Activated B cell treated with CpG ODN at 0.5 μM for 24 hours (primary cell): ENCODE measurements at regions of chr1 and their contacts with region 1.

Region 1: DNA sequence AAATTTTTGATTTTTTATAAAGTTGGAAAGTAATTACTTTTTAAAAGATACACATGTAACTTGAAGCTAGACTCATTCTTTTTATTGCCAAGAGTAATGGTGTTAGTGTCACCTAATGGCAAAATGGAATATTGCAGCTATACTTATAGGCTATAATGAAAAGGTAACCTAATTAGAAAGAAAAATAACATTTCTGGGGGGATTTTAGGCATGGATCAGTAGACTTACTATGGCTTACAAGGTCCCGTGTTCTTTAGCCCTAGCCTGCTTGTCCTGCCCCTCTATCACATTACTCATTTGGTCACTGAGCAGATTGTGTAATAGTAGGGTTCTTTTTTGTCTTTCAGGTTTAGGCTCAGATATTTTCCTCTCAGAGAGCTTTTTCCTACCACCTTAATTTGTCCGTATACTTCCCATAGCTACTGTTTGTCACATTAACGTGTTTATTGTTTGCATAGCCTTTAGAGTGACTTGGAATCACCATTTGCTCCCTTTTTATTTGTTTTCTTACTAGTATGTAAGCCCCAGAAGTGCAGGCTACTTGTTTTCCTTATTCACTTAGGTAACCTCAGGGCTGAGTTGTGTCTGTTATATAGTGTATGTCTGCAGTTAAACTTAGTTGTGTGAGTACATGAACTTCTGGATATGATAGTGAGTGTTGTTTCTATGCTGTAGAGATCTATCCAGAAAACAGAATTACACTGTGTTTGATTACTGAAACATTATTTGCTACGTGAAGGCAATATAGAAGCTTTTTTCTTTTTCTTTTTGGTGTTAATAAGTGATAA is 58.7 kb downstream of the RABGAP1L start:
- DNase-seq: no peak
- ATAC-seq: peak; percentile 81
- H3K4me3 Mint-ChIP-seq: no peak overlapping the region
- H3K27ac Mint-ChIP-seq: no peak overlapping the region
- H3K4me1 Mint-ChIP-seq: peaks cover 28% of the 10 kb centered on the region
- H3K27me3 Mint-ChIP-seq: no peaks in the 10 kb centered on the region
- CTCF ChIP-seq: peak; percentile 23

Region 2: DNA sequence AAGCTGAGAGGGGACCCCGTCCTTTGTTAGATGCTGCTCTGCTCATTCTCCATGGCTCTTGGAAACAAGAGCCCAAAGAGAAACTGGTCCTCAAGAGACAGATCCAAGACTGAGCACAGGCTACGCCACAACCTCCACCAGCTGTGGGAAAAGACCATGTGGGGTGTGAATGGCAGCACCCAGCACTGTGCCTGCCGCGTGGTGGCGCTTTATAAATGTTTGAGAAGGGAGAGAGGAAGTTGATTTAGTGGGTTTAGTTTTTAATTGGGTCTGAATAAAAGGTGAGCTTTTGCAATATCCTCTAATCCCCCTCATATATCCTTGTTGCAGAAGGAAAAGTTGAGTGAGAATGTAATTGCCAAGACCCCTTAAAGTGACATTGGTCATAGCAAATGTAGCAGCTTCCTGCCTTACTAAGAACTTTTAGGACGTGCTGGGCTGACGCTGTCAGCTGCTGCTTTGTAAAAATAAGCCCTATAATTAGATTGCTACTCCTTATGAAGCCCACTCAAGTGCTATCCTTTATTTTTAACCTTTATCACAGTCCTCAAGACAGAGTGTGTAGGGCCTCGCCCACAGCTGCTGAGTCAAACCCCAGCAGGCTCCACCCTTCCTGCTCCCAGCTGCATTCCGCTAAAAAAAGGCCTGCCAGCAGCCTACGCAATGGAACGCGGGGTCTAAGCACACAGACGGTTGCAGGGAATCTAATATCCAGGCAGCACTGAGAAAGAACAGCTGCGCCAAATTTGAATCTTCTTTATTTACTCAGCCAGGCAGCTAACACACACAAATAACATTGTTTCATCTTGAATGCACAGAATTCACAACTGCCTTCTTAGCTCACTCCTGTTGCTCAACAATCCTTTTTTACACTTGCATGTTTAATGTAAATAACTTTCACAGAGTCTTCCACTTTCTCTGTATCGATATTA is 788.2 kb before region 1 on chr1:
- CTCF ChIA-PET with region 1: interaction called, 13 read pairs
- POLR2A ChIA-PET with region 1: no interaction called
- intact Hi-C with region 1: loop called (anchors 5 kb)
- DNase-seq: peak; percentile 54
- ATAC-seq: peak; percentile 87
- H3K4me3 Mint-ChIP-seq: peak overlapping the region; percentile 71
- H3K27ac Mint-ChIP-seq: peak overlapping the region; percentile 87
- H3K4me1 Mint-ChIP-seq: peaks cover 25% of the 10 kb centered on the region
- H3K27me3 Mint-ChIP-seq: no peaks in the 10 kb centered on the region
- CTCF ChIP-seq: no peak

Region 3: DNA sequence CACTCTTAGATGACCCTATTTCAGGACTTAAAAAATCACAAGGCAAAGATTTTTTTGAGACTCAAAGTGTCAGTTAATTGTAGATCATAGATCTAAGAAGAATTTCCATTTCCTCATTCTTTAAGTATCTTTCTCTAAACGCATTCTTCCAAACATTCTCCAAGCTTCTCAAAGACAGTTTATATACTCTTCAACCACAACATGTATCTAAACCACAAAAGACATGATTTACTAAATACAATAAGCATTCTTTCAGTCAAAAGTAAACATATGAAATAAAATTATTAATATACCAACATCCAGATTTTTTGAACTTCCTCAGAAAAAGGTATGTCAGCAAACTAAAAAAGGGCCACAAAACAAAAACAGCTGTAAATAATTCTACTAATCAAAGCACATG is 220.2 kb before region 1 on chr1:
- CTCF ChIA-PET with region 1: interaction called, 3 read pairs
- POLR2A ChIA-PET with region 1: no interaction called
- intact Hi-C with region 1: loop called (anchors 5 kb)
- DNase-seq: no peak
- ATAC-seq: no peak
- H3K4me3 Mint-ChIP-seq: no peak overlapping the region
- H3K27ac Mint-ChIP-seq: no peak overlapping the region
- H3K4me1 Mint-ChIP-seq: peaks cover 55% of the 10 kb centered on the region
- H3K27me3 Mint-ChIP-seq: no peaks in the 10 kb centered on the region
- CTCF ChIP-seq: no peak

Region 4: GRCh38 chr1:174022080-174022975 is 195.7 kb before region 1 on chr1 and contains the start of gene RC3H1:
- CTCF ChIA-PET with region 1: interaction called, 3 read pairs
- POLR2A ChIA-PET with region 1: interaction called, 9 read pairs
- intact Hi-C with region 1: loop called (anchors 2 kb)
- DNase-seq: peak; percentile 88
- ATAC-seq: peak; percentile 93
- H3K4me3 Mint-ChIP-seq: peak within 1 kb of the TSS; percentile 97
- H3K27ac Mint-ChIP-seq: peak within 1 kb of the TSS; percentile 96
- H3K4me1 Mint-ChIP-seq: peaks cover 42% of the 10 kb centered on the region
- H3K27me3 Mint-ChIP-seq: no peaks in the 10 kb centered on the region
- CTCF ChIP-seq: no peak
- total RNA-seq, gene RC3H1: 45.6 and 55.6 TPM in 2 replicates

Region 5: DNA sequence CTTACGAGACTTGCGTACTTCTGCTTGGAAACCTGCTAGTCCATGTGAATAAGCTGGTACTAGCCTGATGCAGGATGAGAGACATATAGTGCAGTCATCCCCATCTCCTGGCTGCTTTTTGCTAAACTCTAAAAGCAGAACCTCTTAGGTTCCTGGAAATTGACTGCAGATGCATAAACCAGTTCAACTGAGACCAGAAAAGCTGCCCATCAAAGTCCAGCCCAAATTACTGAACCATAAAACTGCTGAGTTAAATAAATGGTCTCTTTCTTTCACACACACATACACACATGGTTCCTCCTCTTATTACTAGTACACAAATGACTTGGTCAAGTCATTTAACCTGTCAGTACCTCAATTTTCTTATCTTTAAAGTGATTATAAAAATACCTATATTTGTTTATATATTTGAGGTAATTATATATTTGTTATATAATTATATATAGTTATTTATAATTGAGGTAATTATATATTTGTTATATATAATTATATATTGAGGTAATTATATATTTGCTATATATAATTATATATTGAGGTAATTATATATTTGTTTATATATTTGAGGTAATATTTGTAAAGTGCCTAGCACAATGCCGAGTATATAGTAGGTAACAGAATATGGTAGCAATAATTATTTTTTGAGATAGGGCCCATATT is 83.8 kb before region 1 on chr1:
- CTCF ChIA-PET with region 1: interaction called, 10 read pairs
- POLR2A ChIA-PET with region 1: no interaction called
- intact Hi-C with region 1: no loop called
- DNase-seq: no peak
- ATAC-seq: peak; percentile 95
- H3K4me3 Mint-ChIP-seq: peak overlapping the region; percentile 49
- H3K27ac Mint-ChIP-seq: peak overlapping the region; percentile 81
- H3K4me1 Mint-ChIP-seq: peaks cover 33% of the 10 kb centered on the region
- H3K27me3 Mint-ChIP-seq: no peaks in the 10 kb centered on the region
- CTCF ChIP-seq: no peak

Region 6: DNA sequence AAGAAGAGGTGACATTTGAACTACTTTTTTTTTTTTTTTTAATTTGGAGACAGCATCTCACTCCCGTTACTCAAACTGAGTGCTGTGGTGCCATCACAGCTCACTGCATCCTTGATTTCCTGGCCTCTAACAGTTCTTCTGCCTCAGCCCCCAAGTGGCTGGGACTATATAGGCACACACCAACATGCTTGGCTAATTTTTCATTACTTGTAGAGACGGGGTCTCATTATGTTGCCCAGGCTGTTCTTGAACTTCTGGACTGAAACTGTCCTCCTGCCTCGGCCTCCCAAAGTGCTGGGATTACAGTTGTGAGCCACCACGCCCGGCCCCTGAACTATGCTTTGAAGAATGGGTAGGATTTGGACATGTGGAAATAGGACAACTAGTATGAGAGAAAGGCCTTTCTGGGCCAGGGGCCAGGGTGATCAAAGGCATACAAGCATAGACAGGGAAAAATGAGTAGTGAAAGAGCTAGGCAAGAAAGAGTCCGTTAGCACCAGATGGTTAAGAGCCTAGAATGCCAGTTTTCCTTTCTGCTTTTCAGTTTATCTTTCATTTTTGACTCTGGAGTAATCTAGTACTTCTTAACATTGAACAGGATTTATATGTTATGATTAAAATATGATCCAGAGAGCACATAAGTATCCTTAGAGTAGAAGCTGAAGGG is 52.4 kb before region 1 on chr1:
- CTCF ChIA-PET with region 1: interaction called, 3 read pairs
- POLR2A ChIA-PET with region 1: interaction called, 4 read pairs
- intact Hi-C with region 1: loop called (anchors 1 kb)
- DNase-seq: no peak
- ATAC-seq: peak; percentile 59
- H3K4me3 Mint-ChIP-seq: peak overlapping the region; percentile 12
- H3K27ac Mint-ChIP-seq: peak overlapping the region; percentile 77
- H3K4me1 Mint-ChIP-seq: peaks cover 93% of the 10 kb centered on the region
- H3K27me3 Mint-ChIP-seq: no peaks in the 10 kb centered on the region
- CTCF ChIP-seq: no peak